GM10248 (cell line): ENCODE measurements at regions of chr17 and their contacts with region 1.

Region 1: GRCh38 chr17:56786989-56787482 is 46.7 kb downstream of the C17orf67 start:
- DNase-seq: no peak
- CTCF ChIP-seq: no peak

Region 2: DNA sequence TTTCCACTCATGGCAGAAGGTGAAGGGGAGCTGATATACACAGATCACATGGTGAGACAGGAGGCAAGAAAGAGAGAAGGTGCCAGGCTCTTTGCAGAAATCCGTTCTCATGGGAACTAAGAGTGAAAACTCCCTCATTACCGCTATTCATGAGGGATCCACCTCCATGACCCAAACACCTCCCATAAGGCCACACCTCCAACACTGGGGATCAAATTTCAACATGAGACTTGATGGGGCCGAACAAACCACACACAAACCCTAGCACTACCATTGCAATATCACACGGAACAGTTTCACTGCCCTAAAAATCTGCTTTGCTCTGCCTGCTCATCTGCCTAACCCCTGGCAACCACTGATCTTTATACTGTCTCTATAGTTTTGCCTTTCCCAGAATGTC is 11.9 kb after region 1 on chr17:
- CTCF ChIA-PET with region 1: interaction called, 10 read pairs
- POLR2A ChIA-PET with region 1: no interaction called
- DNase-seq: no peak
- CTCF ChIP-seq: no peak